ENCODE measurements at regions of chr15 and their contacts with region 1.

Region 1: GRCh38 chr15:45378149-45378912 is at the start of gene GATM:
- DNase-seq: peak; percentile 85
- ATAC-seq: peak; percentile 86
- H3K4me3 ChIP-seq: peak within 1 kb of the TSS; percentile 38 to 86 (median 72)
- H3K4me3 Mint-ChIP-seq: peak within 1 kb of the TSS; percentile 90
- H3K27ac ChIP-seq: peak within 1 kb of the TSS; percentile 51 to 63
- H3K27ac Mint-ChIP-seq: peak within 1 kb of the TSS; percentile 89
- H3K4me1 ChIP-seq: peaks cover 9 to 25% of the 10 kb centered on the region in 2 donors
- H3K4me1 Mint-ChIP-seq: peaks cover 20% of the 10 kb centered on the region
- H3K27me3 ChIP-seq: peaks cover 0 to 20% (median 2%) of the 10 kb centered on the region in 4 experiments
- H3K27me3 Mint-ChIP-seq: peaks cover 3% of the 10 kb centered on the region
- CTCF ChIP-seq: peak; percentile 23
- total RNA-seq, gene GATM: 16.6 and 18.2 TPM in 2 replicates

Region 2: GRCh38 chr15:45279024-45279698 is 99.2 kb before region 1 on chr15:
- CTCF ChIA-PET with region 1: no interaction called
- POLR2A ChIA-PET with region 1: interaction called, 3 read pairs
- intact Hi-C with region 1: loop called (anchors 1 kb)
- DNase-seq: peak; percentile 97
- ATAC-seq: peak; percentile 99
- H3K4me3 ChIP-seq: peak overlapping the region; percentile 58 to 88 (median 69)
- H3K4me3 Mint-ChIP-seq: peak overlapping the region; percentile 94
- H3K27ac ChIP-seq: peak overlapping the region; percentile 66 to 68
- H3K27ac Mint-ChIP-seq: peak overlapping the region; percentile 88
- H3K4me1 ChIP-seq: peaks cover 12 to 16% of the 10 kb centered on the region in 2 donors
- H3K4me1 Mint-ChIP-seq: peaks cover 13% of the 10 kb centered on the region
- H3K27me3 ChIP-seq: peaks cover 0 to 5% (median 0%) of the 10 kb centered on the region in 4 experiments
- H3K27me3 Mint-ChIP-seq: peaks cover 9% of the 10 kb centered on the region
- CTCF ChIP-seq: no peak

Region 3: GRCh38 chr15:45391746-45392583 is 13.6 kb after region 1 on chr15:
- CTCF ChIA-PET with region 1: interaction called, 8 read pairs
- POLR2A ChIA-PET with region 1: interaction called, 4 read pairs
- intact Hi-C with region 1: loop called (anchors 1 kb)
- DNase-seq: peak; percentile 88
- ATAC-seq: peak; percentile 90
- H3K4me3 ChIP-seq: peak overlapping the region in 2 of 5 experiments; percentile 23 to 29
- H3K4me3 Mint-ChIP-seq: peak overlapping the region; percentile 73
- H3K27ac ChIP-seq: peak overlapping the region; percentile 85 to 86
- H3K27ac Mint-ChIP-seq: peak overlapping the region; percentile 95
- H3K4me1 ChIP-seq: peaks cover 19% of the 10 kb centered on the region in 2 donors
- H3K4me1 Mint-ChIP-seq: peaks cover 20% of the 10 kb centered on the region
- H3K27me3 ChIP-seq: no peaks in the 10 kb centered on the region
- H3K27me3 Mint-ChIP-seq: peaks cover 2% of the 10 kb centered on the region
- CTCF ChIP-seq: no peak

Region 4: GRCh38 chr15:45468294-45468693 is 90.0 kb after region 1 on chr15:
- CTCF ChIA-PET with region 1: no interaction called
- POLR2A ChIA-PET with region 1: no interaction called
- intact Hi-C with region 1: no loop called
- DNase-seq: no peak
- ATAC-seq: no peak
- H3K4me3 ChIP-seq: no peak overlapping the region
- H3K4me3 Mint-ChIP-seq: no peak overlapping the region
- H3K27ac ChIP-seq: no peak overlapping the region
- H3K27ac Mint-ChIP-seq: no peak overlapping the region
- H3K4me1 ChIP-seq: no peaks in the 10 kb centered on the region
- H3K4me1 Mint-ChIP-seq: no peaks in the 10 kb centered on the region
- H3K27me3 ChIP-seq: peaks cover 0 to 8% (median 0%) of the 10 kb centered on the region in 4 experiments
- H3K27me3 Mint-ChIP-seq: peaks cover 17% of the 10 kb centered on the region
- CTCF ChIP-seq: no peak

Measured in B cell (primary cell).